Caco-2 (cell line): ENCODE measurements at regions of chr5 and their contacts with region 1.

Region 1: GRCh38 chr5:132820162-132820754 is 7.2 kb downstream of the SOWAHA start:
- DNase-seq: peak; percentile 90
- H3K4me3 ChIP-seq: no peak overlapping the region
- H3K4me3 Mint-ChIP-seq: no peak overlapping the region
- H3K27ac Mint-ChIP-seq: no peak overlapping the region
- H3K4me1 ChIP-seq: no peaks in the 10 kb centered on the region; the same call in none of the 2 replicates
- H3K4me1 Mint-ChIP-seq: no peaks in the 10 kb centered on the region
- H3K27me3 ChIP-seq: no peaks in the 10 kb centered on the region
- H3K27me3 Mint-ChIP-seq: no peaks in the 10 kb centered on the region
- CTCF ChIP-seq: peak; percentile 89

Region 2: GRCh38 chr5:132662925-132663770 is 157.1 kb before region 1 on chr5:
- CTCF ChIA-PET with region 1: interaction called, 6 read pairs
- POLR2A ChIA-PET with region 1: no interaction called
- intact Hi-C with region 1: loop called (anchors 5 kb)
- DNase-seq: no peak
- H3K4me3 ChIP-seq: no peak overlapping the region
- H3K4me3 Mint-ChIP-seq: no peak overlapping the region
- H3K27ac Mint-ChIP-seq: no peak overlapping the region
- H3K4me1 ChIP-seq: peaks cover 27% of the 10 kb centered on the region
- H3K4me1 Mint-ChIP-seq: peaks cover 27% of the 10 kb centered on the region
- H3K27me3 ChIP-seq: no peaks in the 10 kb centered on the region
- H3K27me3 Mint-ChIP-seq: no peaks in the 10 kb centered on the region
- CTCF ChIP-seq: no peak

Region 3: DNA sequence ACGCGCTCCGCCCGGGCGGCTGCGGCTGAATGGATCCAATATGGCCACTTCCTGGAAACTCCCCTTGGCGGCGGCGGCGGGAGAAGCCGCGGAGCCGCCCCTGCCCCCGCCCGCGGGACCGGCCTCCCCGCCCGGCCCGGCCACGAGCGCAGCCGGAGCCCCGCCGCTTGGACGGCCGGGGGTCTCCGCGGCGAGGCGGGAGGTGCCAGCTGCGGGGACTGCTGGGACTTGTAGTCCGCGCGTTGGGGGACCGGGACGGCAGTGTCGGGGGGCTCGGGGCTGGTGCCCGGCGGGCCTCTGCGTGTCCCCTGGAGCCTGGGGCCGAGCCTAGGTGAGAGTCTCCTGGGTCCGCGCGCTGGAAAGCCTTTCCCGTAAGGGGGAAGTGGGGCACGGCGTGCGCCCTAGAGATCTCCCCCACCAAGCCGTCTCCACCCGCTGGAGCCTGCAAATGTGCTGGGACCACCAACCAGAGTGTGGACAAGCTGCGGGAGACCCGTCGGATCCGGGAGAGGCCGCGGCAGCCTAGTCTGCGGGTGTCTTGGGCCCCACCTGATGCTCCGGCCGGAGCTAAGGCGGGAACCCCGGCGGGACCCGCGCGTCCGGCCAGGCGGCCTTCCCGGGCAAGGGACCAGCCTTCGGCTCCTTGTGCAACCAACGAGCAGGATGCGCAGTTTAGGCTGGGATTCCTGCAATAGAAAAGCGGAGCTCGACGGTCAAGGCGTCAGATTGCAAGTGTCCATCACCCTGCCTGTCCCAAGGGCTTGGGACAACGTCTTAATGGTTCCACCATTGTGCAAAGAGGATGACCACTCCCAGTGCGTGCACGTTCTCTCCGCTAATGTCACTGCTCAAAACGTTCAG is 42.8 kb before region 1 on chr5 and contains the start of gene SEPTIN8:
- CTCF ChIA-PET with region 1: interaction called, 13 read pairs
- POLR2A ChIA-PET with region 1: no interaction called
- intact Hi-C with region 1: loop called (anchors 2 kb)
- DNase-seq: peak in 1 of 2 experiments; percentile 69
- H3K4me3 ChIP-seq: peak within 1 kb of the TSS; percentile 87
- H3K4me3 Mint-ChIP-seq: peak within 1 kb of the TSS; percentile 73
- H3K27ac Mint-ChIP-seq: peak within 1 kb of the TSS; percentile 46
- H3K4me1 ChIP-seq: peaks cover 25% of the 10 kb centered on the region
- H3K4me1 Mint-ChIP-seq: peaks cover 26% of the 10 kb centered on the region
- H3K27me3 ChIP-seq: no peaks in the 10 kb centered on the region
- H3K27me3 Mint-ChIP-seq: peaks cover 5% of the 10 kb centered on the region
- CTCF ChIP-seq: no peak
- total RNA-seq, gene SEPTIN8: 54.0 and 60.7 TPM in 2 replicates

Region 4: GRCh38 chr5:132807163-132807838 is 13.0 kb before region 1 on chr5:
- CTCF ChIA-PET with region 1: interaction called, 115 read pairs
- POLR2A ChIA-PET with region 1: interaction called, 11 read pairs
- intact Hi-C with region 1: loop called (anchors 1 kb)
- DNase-seq: peak; percentile 87 to 94
- H3K4me3 ChIP-seq: peak overlapping the region; percentile 8
- H3K4me3 Mint-ChIP-seq: peak overlapping the region; percentile 45
- H3K27ac Mint-ChIP-seq: peak overlapping the region; percentile 20
- H3K4me1 ChIP-seq: peaks cover 13% of the 10 kb centered on the region
- H3K4me1 Mint-ChIP-seq: peaks cover 16% of the 10 kb centered on the region
- H3K27me3 ChIP-seq: no peaks in the 10 kb centered on the region
- H3K27me3 Mint-ChIP-seq: no peaks in the 10 kb centered on the region
- CTCF ChIP-seq: peak; percentile 44 to 75